AG04450 (cell line): ENCODE measurements at regions of chr12 and their contacts with region 1.

Region 1: DNA sequence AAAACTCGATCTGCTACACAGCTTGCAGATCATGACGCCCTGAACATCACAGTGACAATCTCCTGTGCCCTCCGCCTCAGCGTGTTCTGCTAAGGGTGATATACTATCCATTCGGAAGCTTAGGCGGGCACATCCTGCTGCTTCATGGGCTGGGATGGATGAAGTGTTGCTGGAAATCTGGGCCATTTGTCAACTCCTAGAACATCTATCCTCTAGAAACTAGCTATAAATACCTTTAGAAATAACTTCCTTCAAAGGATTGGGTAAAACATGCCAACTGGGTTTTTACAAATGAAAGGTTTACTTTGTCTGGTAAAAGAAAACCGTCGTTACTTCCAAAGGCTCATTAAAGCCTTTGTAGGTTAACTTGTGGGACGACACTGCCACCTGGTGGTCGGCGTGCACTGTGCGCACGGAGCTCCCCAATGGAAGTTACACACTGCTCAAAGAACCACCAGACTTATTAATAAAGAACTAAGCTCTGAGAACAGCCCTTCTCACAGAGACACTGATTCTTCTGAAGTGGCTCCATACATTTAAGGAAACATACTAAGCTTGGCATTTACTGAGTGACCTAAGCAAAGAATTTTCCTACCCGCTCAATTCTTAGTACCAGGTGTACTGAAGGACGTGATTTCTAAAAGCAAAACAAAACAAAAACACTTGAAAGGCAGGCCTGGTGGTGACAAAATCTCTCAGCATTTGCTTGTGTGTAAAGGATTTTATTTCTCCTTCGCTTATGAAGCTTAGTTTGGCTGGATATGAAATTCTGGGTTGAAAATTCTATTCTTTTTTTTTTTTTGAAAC is 21.6 kb upstream of the CACNA2D4 start:
- DNase-seq: peak; percentile 68
- H3K4me3 ChIP-seq: no peak overlapping the region
- H3K27ac ChIP-seq: no peak overlapping the region
- H3K27me3 ChIP-seq: no peaks in the 10 kb centered on the region
- CTCF ChIP-seq: peak; percentile 93

Region 2: DNA sequence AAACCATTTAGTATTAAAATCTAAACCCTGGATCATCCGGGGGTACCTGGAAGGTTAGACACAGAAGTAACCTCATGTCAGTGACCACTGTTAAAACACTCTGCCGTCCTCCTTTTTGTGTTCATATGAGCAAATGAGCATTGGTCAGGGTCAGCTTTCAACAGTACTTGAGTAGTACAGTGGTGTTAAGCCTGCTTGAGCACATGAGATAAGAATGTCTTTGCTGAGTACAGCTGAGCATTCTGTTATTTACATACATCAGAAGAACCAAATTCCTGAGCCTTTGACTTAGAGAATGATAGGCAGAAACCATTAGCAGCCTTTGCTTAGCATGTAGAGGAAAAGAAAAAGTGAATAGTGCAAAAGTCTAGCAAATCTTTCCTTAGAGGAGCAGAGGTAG is 158.2 kb before region 1 on chr12:
- CTCF ChIA-PET with region 1: interaction called, 20 read pairs
- POLR2A ChIA-PET with region 1: interaction called, 3 read pairs
- DNase-seq: peak; percentile 62
- H3K4me3 ChIP-seq: no peak overlapping the region
- H3K27ac ChIP-seq: no peak overlapping the region
- H3K27me3 ChIP-seq: no peaks in the 10 kb centered on the region
- CTCF ChIP-seq: no peak

Region 3: DNA sequence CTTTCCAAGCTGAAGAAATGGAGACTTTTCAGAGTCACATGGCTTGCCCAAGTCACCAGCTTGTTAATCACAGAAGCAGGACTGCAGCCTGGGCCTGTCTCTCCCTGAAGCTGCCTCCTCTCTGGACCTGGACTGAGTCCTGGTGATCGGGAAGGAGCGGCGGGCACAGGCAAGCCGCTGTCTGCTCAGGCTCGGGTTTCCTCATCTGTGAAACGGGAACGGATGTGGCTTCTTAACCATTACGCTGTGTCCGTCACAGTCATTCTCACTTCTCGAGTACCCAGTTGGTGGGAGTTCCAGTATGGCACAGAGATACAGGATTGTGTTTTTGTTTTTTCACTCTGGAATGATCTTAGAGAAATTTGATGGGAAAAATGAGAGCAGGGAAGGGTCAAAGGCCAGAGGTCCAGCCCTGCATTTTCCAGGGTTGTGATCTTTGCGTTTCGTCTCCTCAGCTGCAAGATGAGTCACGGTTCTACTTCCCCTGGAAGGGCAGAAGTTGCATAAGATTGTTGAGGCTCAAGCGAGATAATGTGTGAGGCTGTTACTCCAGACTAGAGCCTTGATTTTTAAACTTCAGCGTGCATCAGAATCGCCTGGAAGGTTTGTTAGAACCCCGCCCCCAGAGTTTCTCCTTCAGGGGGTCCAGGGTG is 127.2 kb before region 1 on chr12:
- CTCF ChIA-PET with region 1: interaction called, 18 read pairs
- POLR2A ChIA-PET with region 1: no interaction called
- DNase-seq: no peak
- H3K4me3 ChIP-seq: no peak overlapping the region
- H3K27ac ChIP-seq: no peak overlapping the region
- H3K27me3 ChIP-seq: peaks cover 29% of the 10 kb centered on the region
- CTCF ChIP-seq: no peak

Region 4: DNA sequence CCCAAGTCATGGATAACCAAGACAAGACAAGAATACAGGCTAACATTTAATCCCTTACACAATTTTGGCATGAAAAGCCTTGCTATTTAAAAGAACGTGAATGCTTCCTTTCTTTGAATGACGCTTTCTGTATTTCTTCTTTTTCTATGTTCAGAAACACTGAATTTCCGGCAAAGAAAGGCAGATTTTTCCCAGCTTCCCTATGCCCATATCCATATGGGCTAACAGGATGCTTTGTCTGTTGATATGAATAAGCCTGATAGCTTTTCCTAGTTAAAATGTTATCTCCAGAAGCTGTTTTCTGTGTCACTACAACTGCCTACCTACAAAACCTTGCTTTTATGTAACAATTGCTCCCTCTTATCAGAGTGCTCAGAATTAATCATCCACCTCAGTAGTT is 16.7 kb after region 1 on chr12:
- CTCF ChIA-PET with region 1: interaction called, 63 read pairs
- POLR2A ChIA-PET with region 1: no interaction called
- DNase-seq: no peak
- H3K4me3 ChIP-seq: no peak overlapping the region
- H3K27ac ChIP-seq: no peak overlapping the region
- H3K27me3 ChIP-seq: no peaks in the 10 kb centered on the region
- CTCF ChIP-seq: no peak

Region 5: DNA sequence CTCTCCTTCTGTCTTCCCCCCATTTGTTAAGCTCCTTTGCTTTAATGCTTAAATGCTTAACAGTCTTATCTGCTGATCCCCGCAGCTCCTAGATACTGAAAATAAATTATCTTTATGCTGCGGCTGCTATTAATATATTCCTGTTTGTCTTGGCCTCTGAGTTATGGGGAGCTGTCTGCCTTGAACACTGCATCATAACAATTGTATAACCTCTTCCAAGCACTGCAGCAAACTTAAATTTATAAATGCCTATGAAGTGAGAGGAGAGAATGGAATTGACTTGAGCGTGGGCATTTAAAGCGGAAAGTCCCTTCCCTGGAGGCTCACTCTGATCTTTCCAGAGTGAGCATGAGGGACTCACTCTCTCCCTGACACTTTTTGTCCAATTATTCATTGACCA is 87.3 kb after region 1 on chr12:
- CTCF ChIA-PET with region 1: interaction called, 10 read pairs
- POLR2A ChIA-PET with region 1: no interaction called
- DNase-seq: no peak
- H3K4me3 ChIP-seq: no peak overlapping the region
- H3K27ac ChIP-seq: no peak overlapping the region
- H3K27me3 ChIP-seq: peaks cover 23% of the 10 kb centered on the region
- CTCF ChIP-seq: no peak